Dorsolateral prefrontal cortex (tissue), 120 donors: ENCODE measurements at regions of chr19 and their contacts with region 1.

Region 1: DNA sequence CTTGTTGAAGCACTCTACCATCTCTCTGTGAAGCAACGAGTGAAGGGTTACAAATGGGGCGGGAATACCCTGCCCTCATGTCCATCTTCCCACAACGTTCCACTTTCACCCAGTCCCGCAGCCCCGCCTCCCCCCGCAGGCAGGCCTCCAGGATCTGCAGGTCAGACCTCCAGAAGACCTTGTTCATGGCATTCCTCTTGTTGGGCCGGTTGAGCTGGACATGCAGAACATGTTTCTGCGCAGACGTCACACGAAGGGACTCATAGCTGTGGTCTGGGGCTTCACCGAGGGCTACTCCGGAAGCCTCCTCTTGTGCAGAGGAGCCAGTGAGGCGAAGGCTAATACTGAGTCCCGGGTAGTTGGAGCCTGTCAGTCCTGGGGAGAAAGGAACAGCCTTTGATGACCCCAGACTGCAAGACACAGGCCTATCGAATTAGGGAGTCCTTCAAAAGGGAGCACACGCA is 420 bp downstream of the ECH1 start:
- DNase-seq: peak in 6 of 10 donors; percentile 15 to 59 (median 36)
- H3K4me3 ChIP-seq: peak overlapping the region; percentile 61 to 96 (median 85)
- H3K27ac ChIP-seq: peak overlapping the region; percentile 53 to 98 (median 91)
- H3K27me3 ChIP-seq: no peaks in the 10 kb centered on the region
- CTCF ChIP-seq: no peak

Region 2: DNA sequence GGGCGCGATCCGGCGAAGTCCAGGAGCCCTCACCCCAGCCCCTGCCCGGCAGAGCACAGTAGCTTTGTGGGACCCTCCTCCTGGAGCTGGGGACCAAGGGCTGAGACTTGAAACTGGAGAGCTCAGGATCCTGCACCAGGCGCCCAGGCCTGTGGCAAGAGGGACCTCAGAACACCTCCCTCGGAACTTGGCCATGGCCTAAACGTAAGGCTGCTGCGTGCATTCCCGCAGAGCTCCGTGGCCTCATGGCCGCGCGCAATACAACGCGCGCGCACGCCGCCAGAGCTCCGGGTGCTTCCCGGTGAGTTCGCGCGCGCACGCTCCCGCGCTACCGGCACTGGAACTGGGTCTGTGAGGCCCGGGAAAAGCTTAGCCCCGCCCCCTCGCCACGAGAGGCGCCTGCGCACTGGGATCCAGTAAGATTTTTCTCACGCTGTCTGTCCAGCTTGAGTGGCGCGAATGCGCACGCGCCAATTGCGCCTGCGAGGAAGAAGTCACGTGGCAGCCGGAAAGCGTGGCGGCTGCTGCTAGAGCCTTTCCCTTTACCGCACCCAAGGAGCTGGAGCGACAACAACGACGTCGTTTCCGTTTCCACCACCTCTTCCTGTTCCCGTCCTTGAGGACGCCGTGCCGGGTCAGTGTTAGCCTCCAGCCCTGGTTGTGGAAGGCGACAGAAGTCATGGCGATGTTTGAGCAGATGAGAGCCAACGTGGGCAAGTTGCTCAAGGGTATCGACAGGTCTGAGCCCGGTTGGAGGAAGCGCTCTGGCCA is 212.4 kb before region 1 on chr19 and contains the start of gene EIF3K:
- intact Hi-C with region 1: loop called in 1 of 2 experiments (anchors 5 kb)
- DNase-seq: peak; percentile 96 to 99 (median 99)
- H3K4me3 ChIP-seq: peak within 1 kb of the TSS; percentile 61 to 100 (median 95)
- H3K27ac ChIP-seq: peak within 1 kb of the TSS; percentile 10 to 95 (median 87)
- H3K27me3 ChIP-seq: no peaks in the 10 kb centered on the region
- CTCF ChIP-seq: peak in 38 of 56 donors; percentile 7 to 58 (median 34)
- total RNA-seq, gene EIF3K: 165 to 292 (median 241) TPM

Region 3: GRCh38 chr19:38729653-38730469 is 101.3 kb before region 1 on chr19:
- intact Hi-C with region 1: loop called (anchors 5 kb)
- DNase-seq: peak in 4 of 10 donors; percentile 45 to 66 (median 56)
- H3K4me3 ChIP-seq: no peak overlapping the region
- H3K27ac ChIP-seq: peak overlapping the region in 48 of 59 donors; percentile 9 to 81 (median 59)
- H3K27me3 ChIP-seq: no peaks in the 10 kb centered on the region
- CTCF ChIP-seq: peak; percentile 20 to 80 (median 69)

Region 4: DNA sequence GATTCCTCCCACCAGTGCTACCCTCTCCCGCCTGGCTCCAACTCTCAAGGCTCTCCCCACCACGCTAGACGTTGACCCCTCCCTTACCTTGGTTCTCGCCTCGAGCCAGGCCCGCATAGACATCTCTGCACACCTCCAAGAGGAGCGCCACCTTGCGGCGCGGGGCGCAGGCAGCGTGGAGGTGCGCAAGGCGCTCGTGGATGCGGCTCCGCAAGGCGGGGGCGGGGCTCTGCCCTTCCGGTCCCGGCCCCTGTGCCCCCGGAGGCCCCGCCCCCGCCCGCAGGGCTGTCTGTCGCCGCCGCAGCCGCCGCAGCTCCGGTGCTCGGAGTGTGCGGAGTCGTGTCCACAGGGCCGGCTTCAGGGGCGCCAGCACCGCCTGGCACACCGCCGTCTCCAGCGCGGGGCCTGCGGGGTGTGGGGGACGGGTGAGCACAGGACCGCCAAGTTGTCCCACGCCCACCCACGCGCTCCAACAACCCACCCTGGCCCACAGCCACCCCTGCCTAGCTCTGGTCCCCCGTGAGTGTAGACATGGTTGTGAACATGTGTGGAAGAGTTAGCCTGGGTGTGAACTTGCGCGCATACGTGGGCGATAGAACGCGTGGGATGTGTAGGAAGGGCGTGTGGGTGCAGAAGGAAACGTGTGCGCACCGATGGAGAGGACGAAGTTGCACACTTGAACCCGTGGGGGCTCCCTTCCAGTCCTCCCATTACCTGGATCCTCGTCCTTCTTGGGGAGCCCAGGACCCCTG is 38.9 kb after region 1 on chr19:
- intact Hi-C with region 1: no loop called
- DNase-seq: peak in 9 of 10 donors; percentile 58 to 89 (median 73)
- H3K4me3 ChIP-seq: peak overlapping the region; percentile 33 to 72 (median 61)
- H3K27ac ChIP-seq: peak overlapping the region in 30 of 59 donors; percentile 5 to 77 (median 40)
- H3K27me3 ChIP-seq: no peaks in the 10 kb centered on the region
- CTCF ChIP-seq: peak; percentile 67 to 92 (median 79)

Region 5: DNA sequence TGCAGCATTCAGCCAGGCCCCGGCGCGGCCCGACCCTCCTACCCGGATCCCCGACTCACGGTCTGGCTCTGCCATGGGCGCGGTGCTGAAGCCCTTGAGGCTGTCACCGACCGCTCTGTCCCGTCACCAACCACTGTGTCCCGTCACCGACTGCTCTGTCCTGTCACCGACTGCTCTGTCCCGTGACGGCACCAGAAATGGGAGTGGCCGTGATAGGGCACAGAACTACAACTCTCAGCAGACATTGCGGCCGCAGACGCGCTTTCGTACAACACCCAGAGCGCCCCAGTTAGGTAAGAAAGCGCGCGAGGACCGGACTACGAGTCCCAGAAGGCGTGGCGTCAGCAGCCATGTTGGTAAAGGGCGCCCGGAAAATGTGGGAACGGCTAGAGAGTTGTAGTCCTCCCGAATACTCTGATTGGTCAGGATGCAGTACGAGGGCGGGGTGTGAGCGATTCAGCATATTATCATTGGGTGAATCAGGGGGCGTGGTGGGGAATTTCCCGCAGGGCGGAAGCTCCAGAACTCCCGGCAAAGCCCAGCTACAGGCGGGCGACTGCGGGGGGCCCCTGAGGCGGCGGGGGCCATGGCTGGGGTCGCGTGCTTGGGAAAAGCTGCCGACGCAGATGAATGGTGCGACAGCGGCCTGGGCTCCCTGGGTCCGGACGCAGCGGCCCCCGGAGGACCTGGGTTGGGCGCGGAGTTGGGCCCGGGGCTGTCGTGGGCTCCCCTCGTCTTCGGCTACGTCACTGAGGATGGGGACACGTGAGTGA is 68.5 kb after region 1 on chr19 and contains the starts of genes NFKBIB and SIRT2:
- intact Hi-C with region 1: loop called (anchors 5 kb)
- DNase-seq: peak; percentile 99 to 100 (median 100)
- H3K4me3 ChIP-seq: peak within 1 kb of the TSS; percentile 77 to 100 (median 96)
- H3K27ac ChIP-seq: peak within 1 kb of the TSS; percentile 83 to 100 (median 97)
- H3K27me3 ChIP-seq: no peaks in the 10 kb centered on the region
- CTCF ChIP-seq: peak in 47 of 56 donors; percentile 9 to 65 (median 36)
- total RNA-seq, gene NFKBIB: 15.4 to 37.9 (median 22.5) TPM
- total RNA-seq, gene SIRT2: 113 to 397 (median 166) TPM